K562 (cell line): ENCODE measurements at regions of chr7 and their contacts with region 1.

Region 1: GRCh38 chr7:81638216-81638615 is 131.6 kb downstream of the HGF start:
- DNase-seq: no peak
- ATAC-seq: no peak
- H3K4me3 ChIP-seq: no peak overlapping the region
- H3K27ac ChIP-seq: no peak overlapping the region
- H3K4me1 ChIP-seq: no peaks in the 10 kb centered on the region
- H3K27me3 ChIP-seq: no peaks in the 10 kb centered on the region
- CTCF ChIP-seq: no peak
- EP300 ChIP-seq: no peak
- POLR2A ChIP-seq: no peak
- RAD21 ChIP-seq: no peak

Region 2: GRCh38 chr7:81584667-81585066 is 53.5 kb before region 1 on chr7:
- CTCF ChIA-PET with region 1: no interaction called
- POLR2A ChIA-PET with region 1: no interaction called
- in situ Hi-C with region 1: no loop called
- intact Hi-C with region 1: loop called (anchors 5 kb)
- DNase-seq: no peak
- ATAC-seq: no peak
- H3K4me3 ChIP-seq: no peak overlapping the region
- H3K27ac ChIP-seq: no peak overlapping the region
- H3K4me1 ChIP-seq: no peaks in the 10 kb centered on the region
- H3K27me3 ChIP-seq: no peaks in the 10 kb centered on the region
- CTCF ChIP-seq: no peak
- EP300 ChIP-seq: no peak
- POLR2A ChIP-seq: no peak
- RAD21 ChIP-seq: no peak